CD4-positive, alpha-beta T cell (primary cell): ENCODE measurements at regions of chr6 and their contacts with region 1.

Region 1: DNA sequence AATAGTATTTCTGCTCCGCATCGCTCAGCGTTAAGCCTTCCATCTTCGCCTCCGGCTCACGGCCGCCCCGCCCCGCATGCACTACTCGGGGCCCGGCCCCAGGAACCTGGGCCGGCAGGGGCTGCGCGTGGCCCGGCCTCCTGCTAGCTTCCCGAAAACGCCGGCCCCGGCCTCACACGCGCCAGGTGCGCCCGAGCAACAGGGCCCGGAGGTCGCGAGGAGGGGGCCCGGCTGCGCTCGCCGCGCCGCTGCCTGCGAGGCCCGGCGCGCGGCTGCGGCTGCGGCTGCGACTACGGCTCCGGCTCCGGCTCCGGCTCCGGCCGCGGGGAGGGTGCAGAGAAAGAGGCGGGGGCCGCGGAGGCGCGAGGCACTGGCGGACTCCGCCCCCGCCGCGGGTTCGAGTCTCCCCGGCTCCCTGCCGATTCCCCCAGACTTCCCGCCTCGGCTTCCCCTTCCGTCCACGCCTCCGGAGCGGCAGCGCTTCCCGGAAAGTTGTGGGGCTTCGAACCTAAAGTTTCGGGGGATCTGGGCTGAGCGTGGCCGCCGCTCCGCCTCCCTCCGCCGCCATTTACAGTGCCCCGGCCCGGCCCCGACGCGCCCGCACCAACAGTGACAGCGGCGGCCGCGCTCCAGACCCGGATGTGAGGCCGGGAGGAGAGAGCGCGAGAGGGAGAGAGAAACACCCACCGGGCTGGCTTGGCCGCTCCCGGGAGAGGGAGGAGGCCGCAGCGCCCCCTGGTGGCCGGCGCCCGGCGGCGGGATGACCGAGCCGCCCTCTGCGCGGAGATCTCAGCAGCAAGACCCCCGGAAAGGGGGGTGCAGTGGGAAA is at the start of gene REPS1:
- DNase-seq: peak; percentile 81 to 94 (median 88)
- ATAC-seq: peak; percentile 82
- H3K4me3 ChIP-seq: peak within 1 kb of the TSS; percentile 77
- H3K4me3 Mint-ChIP-seq: peak within 1 kb of the TSS; percentile 90
- H3K27ac ChIP-seq: peak within 1 kb of the TSS; percentile 53 to 54
- H3K27ac Mint-ChIP-seq: peak within 1 kb of the TSS; percentile 89
- H3K4me1 ChIP-seq: peaks cover 36% of the 10 kb centered on the region
- H3K4me1 Mint-ChIP-seq: peaks cover 8% of the 10 kb centered on the region
- H3K27me3 ChIP-seq: no peaks in the 10 kb centered on the region
- H3K27me3 Mint-ChIP-seq: no peaks in the 10 kb centered on the region
- CTCF ChIP-seq: peak; percentile 99
- total RNA-seq, gene REPS1: 54.0 to 56.6 TPM

Region 2: GRCh38 chr6:138773177-138774091 is 214.4 kb before region 1 on chr6 and contains the start of gene CCDC28A:
- CTCF ChIA-PET with region 1: no interaction called
- POLR2A ChIA-PET with region 1: interaction called, 9 read pairs
- intact Hi-C with region 1: loop called (anchors 5 kb)
- DNase-seq: peak; percentile 87 to 97 (median 92)
- ATAC-seq: peak; percentile 84
- H3K4me3 ChIP-seq: peak within 1 kb of the TSS; percentile 85
- H3K4me3 Mint-ChIP-seq: peak within 1 kb of the TSS; percentile 98
- H3K27ac ChIP-seq: peak within 1 kb of the TSS; percentile 93 to 97
- H3K27ac Mint-ChIP-seq: peak within 1 kb of the TSS; percentile 98
- H3K4me1 ChIP-seq: peaks cover 11% of the 10 kb centered on the region
- H3K4me1 Mint-ChIP-seq: peaks cover 39% of the 10 kb centered on the region
- H3K27me3 ChIP-seq: no peaks in the 10 kb centered on the region
- H3K27me3 Mint-ChIP-seq: no peaks in the 10 kb centered on the region
- CTCF ChIP-seq: no peak
- total RNA-seq, gene CCDC28A: 36.9 to 37.2 TPM

Region 3: GRCh38 chr6:138945354-138945753 is 42.5 kb before region 1 on chr6:
- CTCF ChIA-PET with region 1: interaction called, 3 read pairs
- POLR2A ChIA-PET with region 1: interaction called, 3 read pairs
- intact Hi-C with region 1: loop called in 1 of 2 experiments (anchors 5 kb)
- DNase-seq: peak in 3 of 14 experiments; percentile 4 to 25 (median 23)
- ATAC-seq: no peak
- H3K4me3 ChIP-seq: no peak overlapping the region
- H3K4me3 Mint-ChIP-seq: no peak overlapping the region
- H3K27ac ChIP-seq: no peak overlapping the region
- H3K27ac Mint-ChIP-seq: no peak overlapping the region
- H3K4me1 ChIP-seq: peaks cover 8% of the 10 kb centered on the region
- H3K4me1 Mint-ChIP-seq: peaks cover 44% of the 10 kb centered on the region
- H3K27me3 ChIP-seq: no peaks in the 10 kb centered on the region
- H3K27me3 Mint-ChIP-seq: no peaks in the 10 kb centered on the region
- CTCF ChIP-seq: no peak

Region 4: GRCh38 chr6:139028658-139029469 is 41.0 kb after region 1 on chr6 and contains the start of gene ABRACL:
- CTCF ChIA-PET with region 1: interaction called, 4 read pairs
- POLR2A ChIA-PET with region 1: interaction called, 41 read pairs
- intact Hi-C with region 1: loop called (anchors 2 kb)
- DNase-seq: peak; percentile 48 to 88 (median 69)
- ATAC-seq: peak; percentile 89
- H3K4me3 ChIP-seq: peak within 1 kb of the TSS; percentile 85
- H3K4me3 Mint-ChIP-seq: peak within 1 kb of the TSS; percentile 97
- H3K27ac ChIP-seq: peak within 1 kb of the TSS; percentile 84 to 90
- H3K27ac Mint-ChIP-seq: peak within 1 kb of the TSS; percentile 96
- H3K4me1 ChIP-seq: peaks cover 20% of the 10 kb centered on the region
- H3K4me1 Mint-ChIP-seq: peaks cover 35% of the 10 kb centered on the region
- H3K27me3 ChIP-seq: no peaks in the 10 kb centered on the region
- H3K27me3 Mint-ChIP-seq: no peaks in the 10 kb centered on the region
- CTCF ChIP-seq: no peak
- total RNA-seq, gene ABRACL: 36.8 to 40.6 TPM

Region 5: GRCh38 chr6:139134817-139135581 is 147.1 kb after region 1 on chr6 and contains the start of gene HECA:
- CTCF ChIA-PET with region 1: no interaction called
- POLR2A ChIA-PET with region 1: interaction called, 6 read pairs
- intact Hi-C with region 1: loop called (anchors 5 to 10 kb)
- DNase-seq: peak; percentile 97 to 100 (median 99)
- ATAC-seq: peak; percentile 78
- H3K4me3 ChIP-seq: peak within 1 kb of the TSS; percentile 72
- H3K4me3 Mint-ChIP-seq: peak within 1 kb of the TSS; percentile 90
- H3K27ac ChIP-seq: peak within 1 kb of the TSS; percentile 94 to 95
- H3K27ac Mint-ChIP-seq: peak within 1 kb of the TSS; percentile 97
- H3K4me1 ChIP-seq: peaks cover 46% of the 10 kb centered on the region
- H3K4me1 Mint-ChIP-seq: peaks cover 77% of the 10 kb centered on the region
- H3K27me3 ChIP-seq: no peaks in the 10 kb centered on the region
- H3K27me3 Mint-ChIP-seq: no peaks in the 10 kb centered on the region
- CTCF ChIP-seq: no peak
- total RNA-seq, gene HECA: 203 to 207 TPM